Caco-2 (cell line): ENCODE measurements at regions of chr17 and their contacts with region 1.

Region 1: GRCh38 chr17:78019367-78019975 is 61.0 kb downstream of the TNRC6C start:
- DNase-seq: no peak
- H3K4me3 ChIP-seq: no peak overlapping the region
- H3K4me3 Mint-ChIP-seq: no peak overlapping the region
- H3K27ac Mint-ChIP-seq: no peak overlapping the region
- H3K4me1 ChIP-seq: no peaks in the 10 kb centered on the region
- H3K4me1 Mint-ChIP-seq: no peaks in the 10 kb centered on the region
- H3K27me3 ChIP-seq: no peaks in the 10 kb centered on the region
- H3K27me3 Mint-ChIP-seq: no peaks in the 10 kb centered on the region
- CTCF ChIP-seq: peak; percentile 47 to 48

Region 2: DNA sequence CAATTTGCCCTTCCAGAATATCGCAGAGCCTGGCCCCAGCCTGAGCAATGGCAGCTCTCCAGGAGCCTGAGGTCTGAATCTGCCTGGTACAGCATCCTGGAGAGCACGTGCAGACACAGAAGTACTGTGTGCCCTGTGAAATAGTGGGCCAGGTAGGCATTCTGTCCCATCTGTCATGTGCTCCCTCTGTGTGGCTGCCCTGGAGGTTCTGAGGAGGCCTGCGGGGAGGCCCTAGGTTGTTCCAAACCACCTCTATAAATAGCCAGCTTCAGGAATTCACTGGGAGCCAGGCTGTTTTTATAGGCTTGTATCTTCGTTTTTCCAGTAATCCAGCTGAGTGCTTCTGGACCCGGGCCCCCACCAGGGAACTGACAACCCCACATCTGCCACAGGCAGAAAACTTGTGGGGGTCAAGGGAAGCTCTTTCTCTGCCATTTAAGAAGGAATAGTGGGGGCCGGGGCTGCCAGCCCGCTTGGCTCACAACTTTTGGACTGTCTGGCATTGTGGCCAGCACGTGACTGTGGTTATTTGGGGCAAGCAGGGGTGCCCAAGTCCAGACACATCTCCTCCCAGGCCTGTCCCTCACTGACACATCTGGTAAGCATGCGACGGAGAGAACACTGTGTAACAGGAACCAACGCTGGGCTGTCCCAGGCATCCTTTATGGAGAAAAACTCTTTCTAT is 417.3 kb before region 1 on chr17:
- CTCF ChIA-PET with region 1: no interaction called
- POLR2A ChIA-PET with region 1: no interaction called
- intact Hi-C with region 1: no loop called
- DNase-seq: no peak
- H3K4me3 ChIP-seq: no peak overlapping the region
- H3K4me3 Mint-ChIP-seq: no peak overlapping the region
- H3K27ac Mint-ChIP-seq: no peak overlapping the region
- H3K4me1 ChIP-seq: no peaks in the 10 kb centered on the region
- H3K4me1 Mint-ChIP-seq: no peaks in the 10 kb centered on the region
- H3K27me3 ChIP-seq: no peaks in the 10 kb centered on the region
- H3K27me3 Mint-ChIP-seq: peaks cover 10% of the 10 kb centered on the region
- CTCF ChIP-seq: no peak

Region 3: GRCh38 chr17:78040440-78041385 is 21.2 kb after region 1 on chr17:
- CTCF ChIA-PET with region 1: interaction called, 11 read pairs
- POLR2A ChIA-PET with region 1: no interaction called
- intact Hi-C with region 1: no loop called
- DNase-seq: peak; percentile 76 to 77
- H3K4me3 ChIP-seq: peak overlapping the region; percentile 52
- H3K4me3 Mint-ChIP-seq: peak overlapping the region; percentile 83
- H3K27ac Mint-ChIP-seq: peak overlapping the region; percentile 90
- H3K4me1 ChIP-seq: peaks cover 9% of the 10 kb centered on the region
- H3K4me1 Mint-ChIP-seq: peaks cover 5% of the 10 kb centered on the region
- H3K27me3 ChIP-seq: no peaks in the 10 kb centered on the region
- H3K27me3 Mint-ChIP-seq: no peaks in the 10 kb centered on the region
- CTCF ChIP-seq: peak; percentile 16 to 30

Region 4: GRCh38 chr17:78082988-78083387 is 63.5 kb after region 1 on chr17:
- CTCF ChIA-PET with region 1: interaction called, 13 read pairs
- POLR2A ChIA-PET with region 1: no interaction called
- intact Hi-C with region 1: loop called (anchors 1 kb)
- DNase-seq: no peak
- H3K4me3 ChIP-seq: no peak overlapping the region
- H3K4me3 Mint-ChIP-seq: no peak overlapping the region
- H3K27ac Mint-ChIP-seq: no peak overlapping the region
- H3K4me1 ChIP-seq: no peaks in the 10 kb centered on the region
- H3K4me1 Mint-ChIP-seq: no peaks in the 10 kb centered on the region
- H3K27me3 ChIP-seq: no peaks in the 10 kb centered on the region
- H3K27me3 Mint-ChIP-seq: no peaks in the 10 kb centered on the region
- CTCF ChIP-seq: no peak